ENCODE measurements at regions of chr15 and their contacts with region 1.

Region 1: GRCh38 chr15:42137431-42138261 is 18.8 kb downstream of the PLA2G4F start:
- DNase-seq: peak in 3 of 10 donors; percentile 14 to 52 (median 28)

Region 2: GRCh38 chr15:41989259-41989933 is 148.2 kb before region 1 on chr15:
- intact Hi-C with region 1: loop called (anchors 5 kb)
- DNase-seq: peak; percentile 77 to 98 (median 90)

Region 3: GRCh38 chr15:42053914-42054313 is 83.7 kb before region 1 on chr15:
- intact Hi-C with region 1: no loop called
- DNase-seq: no peak

Region 4: GRCh38 chr15:42066764-42067415 is 70.8 kb before region 1 on chr15:
- intact Hi-C with region 1: loop called (anchors 1 kb)
- DNase-seq: peak in 1 of 10 donors; percentile 73

Region 5: DNA sequence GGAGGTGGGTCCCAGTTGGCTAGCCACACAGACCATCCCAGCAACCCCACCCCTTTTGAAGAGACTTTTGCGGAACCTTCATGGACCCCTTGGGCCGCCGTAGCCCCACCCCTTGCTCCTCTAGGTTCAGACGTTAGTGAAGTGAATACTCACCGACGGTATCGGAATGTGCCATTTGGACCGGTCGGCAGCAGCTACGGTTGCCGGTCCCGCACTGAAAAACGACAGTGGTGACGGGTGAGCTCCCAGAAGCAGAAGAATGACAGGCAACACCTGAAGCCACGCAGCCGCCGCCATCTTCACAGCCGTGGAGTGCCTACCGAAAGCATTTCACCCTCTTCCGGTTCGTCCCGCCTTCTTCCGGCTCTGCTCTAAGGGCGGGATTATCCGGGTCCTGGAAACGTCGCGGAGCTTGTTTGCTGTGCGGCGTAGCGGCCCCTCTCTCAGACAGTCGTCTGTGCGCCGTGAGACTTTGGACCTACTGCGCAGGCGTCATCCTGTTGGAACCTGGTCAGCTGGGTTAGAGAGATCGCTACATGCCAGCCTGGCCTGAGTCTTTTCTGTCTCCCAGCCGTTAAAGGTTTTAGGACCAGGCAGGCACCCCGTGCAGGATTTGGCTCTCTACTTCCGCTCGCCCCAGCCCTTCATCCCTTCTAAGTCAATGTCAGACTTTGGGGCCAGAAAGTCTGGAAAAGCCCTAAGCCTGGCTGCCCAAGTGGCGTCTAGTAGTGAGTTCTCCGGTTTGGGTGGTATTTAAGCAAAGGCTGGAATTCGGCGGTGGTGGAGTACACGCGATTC is 135.7 kb after region 1 on chr15 and contains the starts of genes GANC and TMEM87A:
- intact Hi-C with region 1: no loop called
- DNase-seq: peak; percentile 97 to 99 (median 98)

Measured in posterior cingulate gyrus (tissue), 11 donors.